ENCODE measurements at regions of chr2 and their contacts with region 1.

Region 1: DNA sequence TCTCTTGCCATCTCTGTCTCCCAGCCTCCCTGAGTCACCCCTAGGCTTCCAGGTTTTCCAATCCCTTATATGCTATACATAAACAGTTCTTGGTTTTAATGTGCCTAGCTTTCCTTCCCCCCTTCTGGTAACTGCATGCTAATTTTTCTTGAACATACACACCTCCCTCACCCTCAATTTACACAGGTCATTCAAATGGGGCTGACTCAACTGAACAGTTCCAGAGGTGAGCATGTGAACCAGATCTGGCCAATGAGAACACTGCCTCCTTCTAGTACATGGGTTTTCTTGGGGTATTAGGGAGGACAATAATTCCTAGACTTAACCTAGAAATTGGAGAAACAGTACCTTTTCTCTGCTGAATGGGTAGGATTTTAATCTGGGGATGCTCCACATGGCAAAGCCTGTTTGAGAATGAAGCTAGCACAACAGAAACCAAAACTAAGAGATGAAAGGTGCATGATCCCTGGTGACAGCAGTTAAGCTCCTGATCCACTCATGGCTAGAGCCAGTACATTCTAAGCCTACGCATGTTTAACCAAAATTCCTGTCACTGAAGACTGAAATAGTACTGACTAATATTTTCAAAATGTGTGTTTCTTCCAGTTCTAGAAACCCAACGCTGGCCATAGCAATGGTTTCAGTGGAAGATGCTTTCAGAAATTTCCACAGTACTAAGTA is 11.8 kb downstream of the SLC25A12 start:
- DNase-seq: no peak
- H3K4me3 ChIP-seq: peak overlapping the region; percentile 21 to 26
- H3K27ac ChIP-seq: peak overlapping the region; percentile 74 to 75
- H3K4me1 ChIP-seq: peaks cover 0 to 56% (median 24%) of the 10 kb centered on the region in 4 donors
- H3K27me3 ChIP-seq: no peaks in the 10 kb centered on the region
- CTCF ChIP-seq: no peak

Region 2: GRCh38 chr2:170563401-170563800 is 1318.8 kb before region 1 on chr2:
- intact Hi-C with region 1: no loop called
- DNase-seq: no peak
- H3K4me3 ChIP-seq: no peak overlapping the region
- H3K27ac ChIP-seq: no peak overlapping the region
- H3K4me1 ChIP-seq: peaks cover 0 to 27% (median 5%) of the 10 kb centered on the region in 4 donors
- H3K27me3 ChIP-seq: no peaks in the 10 kb centered on the region
- CTCF ChIP-seq: no peak

Region 3: GRCh38 chr2:171922230-171923022 is 40.2 kb after region 1 on chr2 and contains the start of gene HAT1:
- intact Hi-C with region 1: loop called (anchors 5 kb)
- DNase-seq: peak; percentile 96 to 99
- H3K4me3 ChIP-seq: peak within 1 kb of the TSS; percentile 87 to 96
- H3K27ac ChIP-seq: peak within 1 kb of the TSS; percentile 92 to 94
- H3K4me1 ChIP-seq: peaks cover 5 to 20% (median 18%) of the 10 kb centered on the region in 4 donors
- H3K27me3 ChIP-seq: no peaks in the 10 kb centered on the region
- CTCF ChIP-seq: no peak

Measured in tibial artery (tissue), 4 donors.